ENCODE measurements at regions of chr17 and their contacts with region 1.

Region 1: DNA sequence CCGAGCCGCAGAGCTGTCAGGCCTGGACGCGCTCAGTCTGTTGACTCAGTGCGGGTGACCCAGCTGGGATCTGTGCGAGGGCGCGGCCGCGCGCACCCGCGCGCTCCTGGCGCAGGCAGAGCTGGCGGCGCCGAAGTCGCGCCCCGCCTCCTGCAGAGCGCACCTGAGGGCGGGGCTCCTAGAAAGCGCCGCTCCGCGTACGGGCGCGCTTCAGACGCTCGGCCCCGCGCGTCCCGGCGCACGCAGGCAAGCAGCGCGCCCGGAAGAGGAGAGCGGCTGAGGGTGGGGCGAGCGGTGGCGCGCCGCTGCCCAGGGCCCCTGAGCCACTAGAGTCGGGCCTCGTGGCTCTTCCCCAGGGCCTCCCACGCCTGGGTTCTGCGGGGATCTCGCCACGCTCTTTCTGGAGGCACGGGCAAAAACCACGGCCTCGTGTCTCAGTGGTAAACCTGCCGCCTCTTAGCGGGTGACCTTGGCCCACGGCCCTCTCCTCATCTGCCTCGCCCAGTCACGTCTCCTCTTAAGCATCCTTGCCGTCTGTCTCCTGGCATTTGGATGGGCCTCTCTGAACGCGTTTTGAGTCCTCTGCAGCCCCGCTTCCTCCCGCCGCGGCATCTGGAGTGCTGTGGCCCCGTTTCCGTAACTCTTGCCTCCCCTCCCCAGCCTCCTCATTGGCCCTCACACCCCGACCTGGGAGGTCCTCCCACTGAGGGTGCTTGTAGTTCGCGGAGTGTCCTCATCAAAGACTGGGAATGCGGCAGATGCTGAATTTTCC is at the start of gene ABCA5:
- DNase-seq: peak; percentile 83
- H3K4me3 Mint-ChIP-seq: peak within 1 kb of the TSS; percentile 97
- H3K27ac Mint-ChIP-seq: peak within 1 kb of the TSS; percentile 94
- H3K4me1 Mint-ChIP-seq: peaks cover 29% of the 10 kb centered on the region
- H3K27me3 Mint-ChIP-seq: peaks cover 15% of the 10 kb centered on the region
- total RNA-seq, gene ABCA5: 11.4 TPM in 2 replicates

Region 2: GRCh38 chr17:67993596-67994361 is 1333.5 kb before region 1 on chr17:
- intact Hi-C with region 1: loop called (anchors 5 kb)
- DNase-seq: peak; percentile 69
- H3K4me3 Mint-ChIP-seq: peak overlapping the region; percentile 91
- H3K27ac Mint-ChIP-seq: peak overlapping the region; percentile 82
- H3K4me1 Mint-ChIP-seq: peaks cover 33% of the 10 kb centered on the region
- H3K27me3 Mint-ChIP-seq: peaks cover 23% of the 10 kb centered on the region

Region 3: GRCh38 chr17:68512247-68512982 is 814.8 kb before region 1 on chr17 and contains the start of gene PRKAR1A:
- intact Hi-C with region 1: loop called (anchors 2 kb)
- DNase-seq: peak; percentile 90
- H3K4me3 Mint-ChIP-seq: peak within 1 kb of the TSS; percentile 100
- H3K27ac Mint-ChIP-seq: peak within 1 kb of the TSS; percentile 100
- H3K4me1 Mint-ChIP-seq: peaks cover 59% of the 10 kb centered on the region
- H3K27me3 Mint-ChIP-seq: no peaks in the 10 kb centered on the region
- total RNA-seq, gene PRKAR1A: 263 and 265 TPM in 2 replicates

Region 4: DNA sequence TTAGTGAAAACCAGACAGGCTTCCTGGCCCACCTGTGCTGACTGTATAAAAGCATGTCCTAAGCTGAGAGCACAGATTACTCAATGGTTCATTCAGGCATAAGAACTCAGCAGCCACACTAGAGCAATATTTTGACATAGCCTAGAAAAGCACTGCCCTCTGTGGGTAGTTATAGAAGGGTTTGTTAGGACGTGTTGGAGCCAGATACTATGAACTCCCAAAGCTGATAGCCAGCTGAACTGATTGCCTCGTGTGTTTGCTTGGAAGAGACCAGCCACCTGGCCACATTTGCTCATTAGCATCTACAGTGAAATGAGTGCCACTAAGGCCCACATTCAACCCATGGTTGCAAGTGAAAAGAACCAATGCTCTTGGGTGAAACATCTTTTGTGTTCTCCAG is 30.5 kb after region 1 on chr17:
- intact Hi-C with region 1: no loop called
- DNase-seq: no peak
- H3K4me3 Mint-ChIP-seq: no peak overlapping the region
- H3K27ac Mint-ChIP-seq: no peak overlapping the region
- H3K4me1 Mint-ChIP-seq: no peaks in the 10 kb centered on the region
- H3K27me3 Mint-ChIP-seq: peaks cover 9% of the 10 kb centered on the region

Region 5: GRCh38 chr17:69414408-69415274 is 87.4 kb after region 1 on chr17 and contains the start of gene MAP2K6:
- intact Hi-C with region 1: loop called (anchors 1 kb)
- DNase-seq: peak; percentile 71
- H3K4me3 Mint-ChIP-seq: no peak within 1 kb of the TSS
- H3K27ac Mint-ChIP-seq: no peak within 1 kb of the TSS
- H3K4me1 Mint-ChIP-seq: peaks cover 8% of the 10 kb centered on the region
- H3K27me3 Mint-ChIP-seq: no peaks in the 10 kb centered on the region
- total RNA-seq, gene MAP2K6: 3.1 and 3.6 TPM in 2 replicates

Region 6: DNA sequence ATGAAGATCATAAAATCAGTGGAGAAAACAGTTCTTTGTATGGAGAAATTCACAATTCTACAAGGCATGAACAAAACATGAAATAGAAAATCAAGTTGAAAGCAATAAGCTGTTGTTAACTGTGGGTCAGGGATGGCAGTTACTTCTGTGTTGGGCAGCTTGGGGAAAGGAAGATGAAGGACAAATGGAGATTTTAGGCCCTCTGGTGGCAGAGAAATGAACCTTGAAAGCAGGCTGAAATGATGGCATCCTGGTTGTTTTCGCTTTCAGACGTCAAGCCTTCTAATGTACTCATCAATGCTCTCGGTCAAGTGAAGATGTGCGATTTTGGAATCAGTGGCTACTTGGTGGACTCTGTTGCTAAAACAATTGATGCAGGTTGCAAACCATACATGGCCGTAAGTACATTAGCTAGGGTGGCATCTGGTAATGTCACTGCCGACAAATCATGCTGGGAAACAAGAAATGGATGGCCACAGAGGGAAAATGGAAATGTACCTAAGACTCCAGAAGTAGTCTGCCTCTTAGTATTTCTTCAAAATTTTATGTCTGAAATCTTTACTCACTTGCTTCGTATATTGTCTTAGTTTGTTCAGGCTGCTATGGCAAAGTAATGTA is 196.1 kb after region 1 on chr17:
- intact Hi-C with region 1: loop called (anchors 5 kb)
- DNase-seq: no peak
- H3K4me3 Mint-ChIP-seq: no peak overlapping the region
- H3K27ac Mint-ChIP-seq: no peak overlapping the region
- H3K4me1 Mint-ChIP-seq: no peaks in the 10 kb centered on the region
- H3K27me3 Mint-ChIP-seq: no peaks in the 10 kb centered on the region

Region 7: GRCh38 chr17:70168977-70169708 is 841.9 kb after region 1 on chr17 and contains the start of gene KCNJ2:
- intact Hi-C with region 1: loop called (anchors 5 kb)
- DNase-seq: peak; percentile 67
- H3K4me3 Mint-ChIP-seq: peak within 1 kb of the TSS; percentile 81
- H3K27ac Mint-ChIP-seq: no peak within 1 kb of the TSS
- H3K4me1 Mint-ChIP-seq: peaks cover 11% of the 10 kb centered on the region
- H3K27me3 Mint-ChIP-seq: peaks cover 58% of the 10 kb centered on the region
- total RNA-seq, gene KCNJ2: 0.11 TPM in 1 of 2 replicates, not detected in the other